Esophagus squamous epithelium (tissue), 5 donors: ENCODE measurements at regions of chr6 and their contacts with region 1.

Region 1: DNA sequence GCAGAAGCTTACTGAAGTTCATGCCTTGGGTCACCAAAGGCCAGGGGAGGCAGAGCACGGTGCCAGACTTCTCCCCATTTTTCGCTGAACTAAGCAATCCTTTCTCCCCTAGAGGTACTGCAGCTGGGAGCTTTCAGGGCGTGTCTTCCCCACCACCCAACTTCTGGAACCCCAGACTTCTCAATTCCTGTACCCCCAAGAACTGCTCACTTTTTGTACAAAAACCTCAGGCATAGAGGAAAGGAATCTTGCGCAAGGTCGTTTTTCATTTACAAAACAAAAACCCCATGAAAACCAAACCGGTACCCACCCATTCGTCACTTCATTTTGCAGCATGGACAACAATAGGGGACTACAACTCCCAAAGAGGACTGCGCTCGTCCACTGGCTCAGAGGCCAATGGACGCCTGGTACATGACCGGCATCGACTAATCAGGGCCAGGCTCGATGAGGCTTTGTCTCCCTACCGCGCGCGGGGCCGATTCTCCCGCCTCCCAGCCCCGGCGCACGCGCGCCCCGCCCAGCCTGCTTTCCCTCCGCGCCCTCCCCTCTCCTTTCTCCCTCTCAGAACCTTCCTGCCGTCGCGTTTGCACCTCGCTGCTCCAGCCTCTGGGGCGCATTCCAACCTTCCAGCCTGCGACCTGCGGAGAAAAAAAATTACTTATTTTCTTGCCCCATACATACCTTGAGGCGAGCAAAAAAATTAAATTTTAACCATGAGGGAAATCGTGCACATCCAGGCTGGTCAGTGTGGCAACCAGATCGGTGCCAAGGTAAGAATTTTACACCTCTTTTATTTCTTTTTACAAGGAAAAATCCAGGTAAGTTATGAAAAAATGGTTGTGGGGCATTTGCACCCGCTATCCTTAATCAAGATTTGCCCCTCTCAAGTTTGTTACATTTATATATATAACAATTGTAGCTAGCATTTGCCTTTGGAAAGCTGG is at the start of gene TUBB:
- DNase-seq: peak; percentile 87
- H3K4me3 ChIP-seq: peak within 1 kb of the TSS; percentile 57 to 75 (median 72)
- H3K27ac ChIP-seq: peak within 1 kb of the TSS; percentile 91 to 96 (median 94)
- H3K4me1 ChIP-seq: peaks cover 47 to 76% (median 48%) of the 10 kb centered on the region in 3 donors
- H3K27me3 ChIP-seq: no peaks in the 10 kb centered on the region
- CTCF ChIP-seq: peak in 5 of 6 experiments; percentile 10 to 23 (median 14)
- POLR2A ChIP-seq: peak in 3 of 4 donors; percentile 66 to 95 (median 90)
- total RNA-seq, gene TUBB: 151 to 351 (median 255) TPM

Region 2: DNA sequence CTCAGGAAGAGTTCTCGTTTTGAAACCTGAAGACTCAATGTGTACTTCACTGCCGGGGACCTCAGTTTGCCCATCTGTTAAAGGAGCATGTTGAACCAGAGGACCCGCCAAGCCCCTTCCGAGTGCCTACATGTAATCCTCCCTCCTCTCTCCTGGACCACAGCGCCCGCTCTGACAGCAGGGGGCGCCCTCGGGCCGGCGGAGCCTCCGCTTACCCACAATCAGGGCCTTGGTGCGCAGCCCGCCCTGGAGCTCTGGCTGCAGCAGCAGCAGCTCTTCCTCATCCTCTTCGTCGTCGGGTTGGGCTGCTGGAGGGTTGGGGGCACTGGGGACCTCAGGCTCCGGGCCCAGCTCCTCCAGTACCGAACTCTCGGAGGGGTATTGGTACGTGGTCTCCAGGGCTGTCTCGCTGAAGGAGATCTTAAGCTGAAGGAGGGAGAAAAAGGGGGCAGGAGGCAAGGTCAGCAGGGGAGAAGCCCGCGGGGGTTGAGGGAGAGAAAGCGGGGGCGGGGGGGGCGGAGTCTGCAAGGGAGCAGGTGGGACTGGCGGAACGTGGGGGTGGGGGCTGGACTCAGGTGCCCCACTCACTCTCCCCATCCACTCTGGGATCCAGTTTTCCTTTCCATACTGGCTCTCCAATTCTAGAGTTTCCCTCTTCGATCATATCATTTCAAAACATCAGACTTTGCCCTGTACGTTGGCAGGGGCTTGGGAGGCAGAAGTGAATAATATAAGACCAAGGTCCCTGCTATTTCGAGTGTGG is 40.9 kb before region 1 on chr6:
- intact Hi-C with region 1: loop called (anchors 2 kb)
- DNase-seq: no peak
- H3K4me3 ChIP-seq: peak overlapping the region in 2 of 4 donors; percentile 73 to 86
- H3K27ac ChIP-seq: peak overlapping the region; percentile 5 to 99 (median 74)
- H3K4me1 ChIP-seq: peaks cover 37 to 57% (median 42%) of the 10 kb centered on the region in 3 donors
- H3K27me3 ChIP-seq: no peaks in the 10 kb centered on the region
- CTCF ChIP-seq: peak; percentile 91 to 98 (median 97)
- POLR2A ChIP-seq: peak in 1 of 4 donors; percentile 10